Heart right ventricle (tissue), 16 donors: ENCODE measurements at regions of chrX and their contacts with region 1.

Region 1: DNA sequence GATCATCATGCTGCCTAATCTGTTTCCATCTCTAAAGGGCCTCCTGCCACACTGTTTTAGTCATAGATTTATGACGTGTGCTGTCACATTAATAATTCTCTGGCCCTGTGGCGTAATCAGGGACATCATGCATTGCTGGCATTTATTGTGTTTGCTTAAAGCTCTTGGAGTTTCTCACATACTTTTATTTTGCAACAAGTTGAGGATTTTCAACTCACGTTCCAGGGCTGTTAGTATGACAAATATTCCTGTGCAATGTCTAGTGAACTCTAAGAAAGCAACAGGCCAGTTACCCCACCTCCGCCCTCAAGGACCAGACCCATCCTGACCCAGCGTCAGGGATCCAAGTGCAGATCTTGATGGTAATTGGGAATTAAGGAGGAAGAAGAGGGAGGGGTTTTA is 7.8 kb upstream of the PIGA start:
- DNase-seq: no peak
- ATAC-seq: peak in 1 of 8 donors; percentile 20
- H3K4me3 ChIP-seq: no peak overlapping the region
- H3K27ac ChIP-seq: no peak overlapping the region
- H3K4me1 ChIP-seq: no peaks in the 10 kb centered on the region
- H3K27me3 ChIP-seq: peaks cover 0 to 71% (median 0%) of the 10 kb centered on the region in 7 donors
- CTCF ChIP-seq: no peak

Region 2: DNA sequence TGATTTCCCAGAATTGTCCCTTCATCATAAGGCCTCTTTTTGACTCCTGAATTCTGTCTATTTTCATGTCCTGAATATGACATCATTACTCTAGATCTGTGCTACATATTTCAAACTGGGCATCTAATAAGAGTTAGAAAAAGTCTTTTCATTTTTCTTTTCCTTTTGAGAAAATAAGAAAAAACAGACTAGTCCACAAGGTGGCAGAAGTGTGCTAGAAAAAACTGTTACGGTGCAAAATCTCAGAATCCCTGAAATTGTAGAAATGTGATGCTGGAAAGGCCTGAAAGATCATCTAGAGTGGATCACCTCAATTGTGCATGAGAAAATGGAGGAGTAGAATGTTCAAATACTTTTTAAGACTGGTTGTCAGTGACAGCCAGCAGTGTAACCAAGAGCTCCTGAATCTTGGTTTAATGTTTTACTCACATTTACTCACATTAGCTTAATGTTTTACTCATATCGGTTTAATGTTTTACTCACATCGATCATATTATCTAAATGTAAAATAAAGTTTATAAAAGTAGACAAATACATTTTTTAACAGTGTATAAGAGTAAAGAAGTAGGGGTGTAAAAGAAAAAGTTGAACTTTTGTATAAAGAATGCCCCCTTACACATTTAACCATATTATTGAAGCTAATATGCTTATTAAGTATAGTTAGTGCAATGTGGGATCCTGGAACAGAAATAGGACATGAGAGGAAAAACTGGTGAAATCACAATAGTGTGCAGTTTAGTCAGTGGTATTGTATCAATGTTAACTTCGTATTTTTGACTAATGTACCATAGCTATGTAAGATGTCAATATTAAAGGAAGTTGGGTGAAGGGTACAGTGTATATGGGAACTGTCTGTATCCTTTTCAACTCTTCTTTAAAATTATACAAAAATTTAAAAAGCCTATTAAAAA is 42.9 kb before region 1 on chrX:
- intact Hi-C with region 1: loop called in 1 of 10 experiments (anchors 5 kb)
- DNase-seq: no peak
- ATAC-seq: no peak
- H3K4me3 ChIP-seq: peak overlapping the region in 2 of 10 donors; percentile 8 to 14
- H3K27ac ChIP-seq: peak overlapping the region in 7 of 10 donors; percentile 68 to 86 (median 77)
- H3K4me1 ChIP-seq: peaks cover 0 to 51% (median 20%) of the 10 kb centered on the region in 9 donors
- H3K27me3 ChIP-seq: peaks cover 0 to 14% (median 0%) of the 10 kb centered on the region in 7 donors
- CTCF ChIP-seq: peak in 8 of 9 donors; percentile 14 to 66 (median 54)